ENCODE measurements at regions of chr7 and their contacts with region 1.

Region 1: DNA sequence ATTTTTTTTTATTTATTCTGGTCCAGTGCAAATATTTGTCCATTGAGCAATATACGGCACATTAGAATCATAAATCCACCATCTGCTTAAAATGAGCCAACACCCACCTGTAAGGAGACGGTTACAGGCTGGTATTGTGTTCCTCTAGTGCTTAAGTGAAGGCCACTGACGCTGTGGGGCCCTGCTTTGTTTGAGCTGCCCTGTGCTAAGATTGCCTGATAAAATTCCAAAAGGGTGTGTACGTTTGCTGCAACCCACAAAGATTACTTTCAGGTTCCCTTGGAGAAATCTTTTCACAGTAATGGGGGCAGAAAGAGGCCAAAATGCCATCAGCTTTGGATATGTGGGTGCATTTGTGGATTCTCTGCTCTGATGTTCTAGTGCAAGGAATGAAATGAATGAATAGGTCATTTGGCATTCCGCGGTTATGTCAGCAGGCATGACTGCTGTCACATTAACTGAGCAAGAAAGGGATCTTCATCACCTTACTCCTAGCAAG is 34.4 kb downstream of the AGR3 start:
- DNase-seq: peak; percentile 72
- H3K4me3 Mint-ChIP-seq: peak overlapping the region; percentile 26
- H3K27ac Mint-ChIP-seq: peak overlapping the region; percentile 68
- H3K4me1 Mint-ChIP-seq: peaks cover 37% of the 10 kb centered on the region
- H3K27me3 Mint-ChIP-seq: no peaks in the 10 kb centered on the region
- CTCF ChIP-seq: no peak

Region 2: GRCh38 chr7:15954671-15955354 is 892.6 kb before region 1 on chr7:
- CTCF ChIA-PET with region 1: no interaction called
- intact Hi-C with region 1: no loop called
- DNase-seq: no peak
- H3K4me3 Mint-ChIP-seq: no peak overlapping the region
- H3K27ac Mint-ChIP-seq: no peak overlapping the region
- H3K4me1 Mint-ChIP-seq: no peaks in the 10 kb centered on the region
- H3K27me3 Mint-ChIP-seq: peaks cover 26% of the 10 kb centered on the region
- CTCF ChIP-seq: no peak

Region 3: DNA sequence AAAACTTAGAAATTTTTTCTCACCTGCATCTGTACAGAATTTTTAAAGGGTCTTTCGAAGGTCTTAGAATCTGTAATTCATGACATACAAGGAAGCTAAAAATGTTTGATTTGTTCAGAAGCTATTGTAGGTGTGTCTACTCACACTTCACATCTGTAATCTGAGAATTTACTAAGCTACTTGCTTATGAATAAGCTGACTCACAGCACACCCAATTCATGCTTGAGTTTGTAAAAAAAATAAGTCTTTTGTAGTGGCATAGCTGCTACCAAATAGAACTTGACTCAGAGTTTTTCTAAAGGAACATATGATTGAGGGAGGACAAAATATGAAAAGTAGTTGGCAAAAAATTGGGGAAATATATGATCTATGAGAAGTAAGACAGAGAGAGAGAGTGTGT is 29.9 kb before region 1 on chr7:
- CTCF ChIA-PET with region 1: interaction called, 3 read pairs
- intact Hi-C with region 1: loop called (anchors 1 kb)
- DNase-seq: no peak
- H3K4me3 Mint-ChIP-seq: peak overlapping the region; percentile 0
- H3K27ac Mint-ChIP-seq: peak overlapping the region; percentile 53
- H3K4me1 Mint-ChIP-seq: peaks cover 75% of the 10 kb centered on the region
- H3K27me3 Mint-ChIP-seq: no peaks in the 10 kb centered on the region
- CTCF ChIP-seq: no peak